ENCODE measurements at regions of chr16 and their contacts with region 1.

Region 1: GRCh38 chr16:58515125-58515870 is at the start of gene SETD6:
- DNase-seq: peak; percentile 92 to 96
- ATAC-seq: peak; percentile 96
- H3K4me3 ChIP-seq: peak within 1 kb of the TSS; percentile 45 to 85
- H3K27ac ChIP-seq: peak within 1 kb of the TSS in 1 of 2 donors; percentile 36
- H3K4me1 ChIP-seq: no peaks in the 10 kb centered on the region
- H3K27me3 ChIP-seq: no peaks in the 10 kb centered on the region
- total RNA-seq, gene SETD6: 11.1 to 16.2 TPM

Region 2: DNA sequence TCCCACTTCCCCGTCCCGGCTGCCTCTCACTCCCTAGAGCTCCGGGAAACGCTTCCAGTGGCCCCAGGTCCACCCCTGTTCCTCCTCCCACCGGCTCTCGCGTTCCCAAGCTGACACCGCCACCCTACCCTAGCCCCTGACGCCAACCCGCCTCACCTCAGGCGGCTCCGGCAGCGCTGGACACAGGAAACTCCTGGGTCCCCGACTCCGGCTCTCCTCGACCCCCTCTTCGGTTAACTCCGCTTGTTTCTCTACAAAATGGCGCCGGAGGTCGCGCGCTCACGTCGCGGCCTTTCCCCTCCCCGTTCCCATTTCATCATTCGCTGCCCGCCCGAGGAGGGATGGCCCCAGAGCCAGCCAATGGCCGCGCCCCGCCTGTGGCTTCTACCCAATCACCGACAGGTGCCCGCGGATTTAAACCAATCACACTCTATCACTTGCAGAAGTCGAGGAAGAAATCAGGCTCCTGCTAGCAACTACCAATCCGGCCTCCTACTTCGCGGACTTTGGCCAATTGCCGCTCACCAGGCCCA is 114.3 kb after region 1 on chr16 and contains the start of gene CNOT1:
- intact Hi-C with region 1: loop called in 1 of 2 experiments (anchors 10 kb)
- DNase-seq: peak; percentile 98
- ATAC-seq: peak; percentile 97
- H3K4me3 ChIP-seq: peak within 1 kb of the TSS; percentile 64 to 91
- H3K27ac ChIP-seq: peak within 1 kb of the TSS; percentile 87 to 96
- H3K4me1 ChIP-seq: no peaks in the 10 kb centered on the region
- H3K27me3 ChIP-seq: no peaks in the 10 kb centered on the region
- total RNA-seq, gene CNOT1: 103 to 124 TPM

Region 3: GRCh38 chr16:58661199-58661830 is 146.0 kb after region 1 on chr16:
- intact Hi-C with region 1: loop called (anchors 5 to 10 kb)
- DNase-seq: peak; percentile 66 to 77
- ATAC-seq: peak; percentile 78
- H3K4me3 ChIP-seq: no peak overlapping the region
- H3K27ac ChIP-seq: no peak overlapping the region
- H3K4me1 ChIP-seq: no peaks in the 10 kb centered on the region
- H3K27me3 ChIP-seq: no peaks in the 10 kb centered on the region

Region 4: DNA sequence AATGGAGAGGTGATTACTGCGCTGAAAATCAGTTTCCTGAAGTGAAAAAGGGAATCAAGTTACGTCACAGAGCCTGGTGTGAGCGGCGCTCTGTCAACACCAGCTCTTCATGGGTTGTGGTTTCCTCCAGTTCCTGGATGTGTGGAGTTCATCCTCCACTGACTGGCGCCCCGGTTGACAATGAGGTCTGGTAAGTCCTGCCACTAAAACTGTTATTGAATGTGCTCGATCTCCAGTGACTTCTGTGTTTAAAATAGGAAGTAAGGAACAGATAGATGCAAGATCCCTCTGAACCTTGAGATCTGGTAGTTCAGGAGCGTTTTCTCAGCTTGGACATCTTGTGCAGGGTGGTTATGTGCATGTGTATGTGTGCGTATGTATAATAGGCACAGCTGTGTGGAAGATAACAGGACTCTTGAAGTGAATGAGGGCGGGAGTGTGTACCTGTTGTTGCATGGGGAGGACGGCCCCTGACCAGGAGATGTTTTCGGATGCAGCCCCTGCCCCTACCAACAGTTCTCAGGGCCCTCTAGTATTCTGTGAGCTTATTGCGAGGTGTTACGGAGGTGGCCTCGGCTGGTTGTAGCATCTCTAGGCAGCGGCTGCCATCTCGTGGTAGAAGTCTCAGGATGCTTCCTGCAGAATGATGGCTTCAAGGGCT is 240.8 kb after region 1 on chr16:
- intact Hi-C with region 1: loop called in 1 of 2 experiments (anchors 5 kb)
- DNase-seq: peak; percentile 76 to 86
- ATAC-seq: peak; percentile 84
- H3K4me3 ChIP-seq: no peak overlapping the region
- H3K27ac ChIP-seq: no peak overlapping the region
- H3K4me1 ChIP-seq: no peaks in the 10 kb centered on the region
- H3K27me3 ChIP-seq: no peaks in the 10 kb centered on the region